HEK293T (cell line): ENCODE measurements at regions of chr19 and their contacts with region 1.

Region 1: GRCh38 chr19:2900296-2901252 is at the start of gene ZNF57:
- DNase-seq: peak; percentile 93

Region 2: GRCh38 chr19:2840794-2841790 is 59.5 kb before region 1 on chr19 and contains the start of gene ZNF555:
- CTCF ChIA-PET with region 1: interaction called, 3 read pairs
- POLR2A ChIA-PET with region 1: interaction called, 12 read pairs
- DNase-seq: peak; percentile 94

Region 3: GRCh38 chr19:2912306-2912705 is 11.7 kb after region 1 on chr19:
- CTCF ChIA-PET with region 1: no interaction called
- POLR2A ChIA-PET with region 1: no interaction called
- DNase-seq: no peak

Region 4: GRCh38 chr19:2923510-2923909 is 22.9 kb after region 1 on chr19:
- CTCF ChIA-PET with region 1: no interaction called
- POLR2A ChIA-PET with region 1: interaction called, 11 read pairs
- DNase-seq: no peak